Heart right ventricle (tissue), 16 donors: ENCODE measurements at regions of chr17 and their contacts with region 1.

Region 1: GRCh38 chr17:19533718-19534561 is at the start of gene SLC47A1:
- DNase-seq: peak in 1 of 2 donors; percentile 42
- ATAC-seq: peak; percentile 84 to 93 (median 90)
- H3K4me3 ChIP-seq: peak within 1 kb of the TSS; percentile 44 to 69 (median 64)
- H3K27ac ChIP-seq: peak within 1 kb of the TSS in 4 of 10 donors; percentile 36 to 56 (median 44)
- H3K4me1 ChIP-seq: peaks cover 0 to 26% (median 13%) of the 10 kb centered on the region in 9 donors
- H3K27me3 ChIP-seq: peaks cover 0 to 46% (median 27%) of the 10 kb centered on the region in 7 donors
- CTCF ChIP-seq: no peak
- total RNA-seq, gene SLC47A1: 2.1 to 20.3 (median 9.2) TPM

Region 2: GRCh38 chr17:19464031-19465026 is 69.6 kb before region 1 on chr17:
- intact Hi-C with region 1: no loop called
- DNase-seq: no peak
- ATAC-seq: peak in 3 of 8 donors; percentile 22 to 43 (median 36)
- H3K4me3 ChIP-seq: peak overlapping the region in 1 of 10 donors; percentile 32
- H3K27ac ChIP-seq: peak overlapping the region in 1 of 10 donors; percentile 85
- H3K4me1 ChIP-seq: peaks cover 0 to 41% (median 6%) of the 10 kb centered on the region in 9 donors
- H3K27me3 ChIP-seq: peaks cover 0 to 8% (median 0%) of the 10 kb centered on the region in 7 donors
- CTCF ChIP-seq: no peak

Region 3: DNA sequence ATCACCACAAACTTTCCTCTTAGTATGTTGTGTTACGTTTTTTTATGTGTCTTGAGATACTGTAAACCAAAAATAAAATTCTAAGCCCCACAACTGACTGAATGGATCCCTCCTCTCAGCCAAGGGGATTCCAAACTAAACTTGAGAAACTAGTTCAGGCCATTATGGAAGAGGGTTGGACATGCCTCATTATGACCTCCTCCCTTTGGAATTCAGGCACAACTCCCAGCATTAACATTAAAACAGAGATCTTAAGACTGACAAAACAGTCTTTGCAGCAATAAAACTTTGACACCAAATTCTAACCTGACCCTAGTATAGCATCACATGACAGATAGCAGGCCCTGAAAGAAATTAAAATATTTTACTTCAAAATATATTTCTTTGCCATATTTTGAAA is 51.4 kb before region 1 on chr17:
- intact Hi-C with region 1: no loop called
- DNase-seq: no peak
- ATAC-seq: no peak
- H3K4me3 ChIP-seq: no peak overlapping the region
- H3K27ac ChIP-seq: no peak overlapping the region
- H3K4me1 ChIP-seq: peaks cover 0 to 8% (median 0%) of the 10 kb centered on the region in 9 donors
- H3K27me3 ChIP-seq: no peaks in the 10 kb centered on the region
- CTCF ChIP-seq: no peak

Region 4: GRCh38 chr17:19554377-19554776 is 20.4 kb after region 1 on chr17:
- intact Hi-C with region 1: no loop called
- DNase-seq: no peak
- ATAC-seq: peak in 7 of 8 donors; percentile 59 to 84 (median 73)
- H3K4me3 ChIP-seq: no peak overlapping the region
- H3K27ac ChIP-seq: peak overlapping the region in 6 of 10 donors; percentile 7 to 66 (median 52)
- H3K4me1 ChIP-seq: peaks cover 0 to 7% (median 0%) of the 10 kb centered on the region in 9 donors
- H3K27me3 ChIP-seq: peaks cover 0 to 4% (median 0%) of the 10 kb centered on the region in 7 donors
- CTCF ChIP-seq: peak in 1 of 9 donors; percentile 5

Region 5: GRCh38 chr17:19579867-19580565 is 46.1 kb after region 1 on chr17:
- intact Hi-C with region 1: loop called in 1 of 10 experiments (anchors 5 kb)
- DNase-seq: peak in 1 of 2 donors; percentile 17
- ATAC-seq: peak in 6 of 8 donors; percentile 39 to 75 (median 60)
- H3K4me3 ChIP-seq: peak overlapping the region in 9 of 10 donors; percentile 40 to 52 (median 46)
- H3K27ac ChIP-seq: peak overlapping the region in 1 of 10 donors; percentile 22
- H3K4me1 ChIP-seq: peaks cover 0 to 9% (median 0%) of the 10 kb centered on the region in 9 donors
- H3K27me3 ChIP-seq: peaks cover 0 to 31% (median 21%) of the 10 kb centered on the region in 7 donors
- CTCF ChIP-seq: no peak

Region 6: DNA sequence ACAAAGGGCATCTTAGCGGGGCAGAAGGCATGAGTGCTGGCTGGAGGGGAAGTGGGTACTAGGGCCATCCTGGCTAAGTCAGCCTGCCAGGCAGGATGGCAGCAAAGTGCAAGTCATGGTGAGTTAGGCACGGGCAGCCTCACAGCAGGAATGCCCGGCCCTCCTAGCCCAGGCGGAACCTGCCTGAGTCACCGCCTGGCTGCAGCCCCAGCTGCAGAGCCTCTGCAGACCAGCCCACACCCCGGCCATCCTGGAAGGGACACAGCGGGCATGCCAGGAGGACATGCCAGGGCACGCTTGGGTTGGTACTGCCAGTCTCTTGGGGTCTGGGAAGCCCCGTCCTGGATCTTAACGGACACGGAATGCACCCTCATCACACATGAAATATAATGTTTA is 219.1 kb after region 1 on chr17:
- intact Hi-C with region 1: loop called in 1 of 10 experiments (anchors 5 kb)
- DNase-seq: peak; percentile 64 to 67
- ATAC-seq: peak; percentile 86 to 99 (median 96)
- H3K4me3 ChIP-seq: no peak overlapping the region
- H3K27ac ChIP-seq: peak overlapping the region; percentile 20 to 85 (median 71)
- H3K4me1 ChIP-seq: peaks cover 0 to 15% (median 6%) of the 10 kb centered on the region in 9 donors
- H3K27me3 ChIP-seq: peaks cover 0 to under 1% (median 0%) of the 10 kb centered on the region in 7 donors
- CTCF ChIP-seq: no peak